ENCODE measurements at regions of chr1 and their contacts with region 1.

Region 1: GRCh38 chr1:197775282-197776262 is at the start of gene DENND1B:
- DNase-seq: peak; percentile 87
- H3K4me3 Mint-ChIP-seq: peak within 1 kb of the TSS; percentile 87
- H3K27ac Mint-ChIP-seq: peak within 1 kb of the TSS; percentile 100
- H3K4me1 Mint-ChIP-seq: peaks cover 67% of the 10 kb centered on the region
- H3K27me3 Mint-ChIP-seq: no peaks in the 10 kb centered on the region
- total RNA-seq, gene DENND1B: 30.6 to 31.0 TPM

Region 2: DNA sequence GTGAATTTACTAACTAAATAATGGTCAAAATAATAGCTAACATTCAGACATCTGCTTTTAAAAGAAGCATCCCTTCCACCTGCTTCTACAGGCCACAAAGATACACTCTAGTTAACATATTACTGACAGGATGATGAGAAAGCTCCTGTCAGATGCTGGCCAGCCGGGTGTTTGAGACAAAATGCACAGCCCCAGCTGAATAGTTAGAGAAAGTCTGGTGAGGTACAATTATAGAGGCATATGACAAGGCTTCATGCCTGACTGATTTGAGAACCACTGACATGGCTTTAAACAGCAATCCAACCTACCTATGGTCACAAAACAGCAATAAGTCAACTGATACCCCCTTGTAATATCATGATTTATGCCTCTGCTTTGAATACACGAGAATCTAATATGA is 137.3 kb before region 1 on chr1:
- CTCF ChIA-PET with region 1: no interaction called
- POLR2A ChIA-PET with region 1: no interaction called
- DNase-seq: no peak
- H3K4me3 Mint-ChIP-seq: no peak overlapping the region
- H3K27ac Mint-ChIP-seq: no peak overlapping the region
- H3K4me1 Mint-ChIP-seq: no peaks in the 10 kb centered on the region
- H3K27me3 Mint-ChIP-seq: no peaks in the 10 kb centered on the region

Region 3: GRCh38 chr1:197761621-197762020 is 14.0 kb before region 1 on chr1:
- CTCF ChIA-PET with region 1: interaction called, 7 read pairs
- POLR2A ChIA-PET with region 1: interaction called, 60 read pairs
- DNase-seq: no peak
- H3K4me3 Mint-ChIP-seq: no peak overlapping the region
- H3K27ac Mint-ChIP-seq: peak overlapping the region; percentile 65
- H3K4me1 Mint-ChIP-seq: peaks cover 41% of the 10 kb centered on the region
- H3K27me3 Mint-ChIP-seq: no peaks in the 10 kb centered on the region

Measured in activated CD4-positive, alpha-beta memory T cell treated with anti-CD3 and anti-CD28 coated beads, Interleukin-2, amount 10 ng/mL, durations not matched to agents 7 days and 5 days (primary cell).